ENCODE measurements at regions of chr1 and their contacts with region 1.

Region 1: DNA sequence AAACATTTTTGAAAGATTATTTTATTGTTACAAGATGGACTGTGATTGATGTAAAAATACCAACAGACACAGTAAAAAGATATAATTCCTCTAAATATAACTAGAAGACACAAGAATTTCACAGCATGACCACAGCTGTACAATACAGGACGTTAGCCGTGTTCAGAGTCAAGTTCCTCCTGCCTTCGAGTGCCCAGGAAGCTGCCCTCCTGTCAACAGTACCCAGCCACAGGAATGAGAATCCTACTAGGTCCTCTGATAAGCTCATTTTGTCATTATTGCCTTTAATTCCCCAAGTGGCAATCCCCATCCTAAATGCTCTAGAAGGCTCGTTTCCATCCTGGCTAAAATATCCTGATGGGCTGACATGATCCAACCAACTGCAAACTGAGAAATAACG is 16.4 kb upstream of the CAPN2 start:
- DNase-seq: no peak

Region 2: GRCh38 chr1:223707256-223708000 is 11.5 kb after region 1 on chr1:
- CTCF ChIA-PET with region 1: interaction called, 16 read pairs
- POLR2A ChIA-PET with region 1: interaction called, 3 read pairs
- DNase-seq: no peak

Region 3: GRCh38 chr1:223853748-223854147 is 157.8 kb after region 1 on chr1:
- CTCF ChIA-PET with region 1: no interaction called
- POLR2A ChIA-PET with region 1: no interaction called
- DNase-seq: no peak

Region 4: GRCh38 chr1:224411766-224412165 is 715.8 kb after region 1 on chr1:
- CTCF ChIA-PET with region 1: interaction called, 11 read pairs
- POLR2A ChIA-PET with region 1: no interaction called
- DNase-seq: no peak

Measured in HEK293T (cell line).